ENCODE measurements at regions of chr3 and their contacts with region 1.

Region 1: DNA sequence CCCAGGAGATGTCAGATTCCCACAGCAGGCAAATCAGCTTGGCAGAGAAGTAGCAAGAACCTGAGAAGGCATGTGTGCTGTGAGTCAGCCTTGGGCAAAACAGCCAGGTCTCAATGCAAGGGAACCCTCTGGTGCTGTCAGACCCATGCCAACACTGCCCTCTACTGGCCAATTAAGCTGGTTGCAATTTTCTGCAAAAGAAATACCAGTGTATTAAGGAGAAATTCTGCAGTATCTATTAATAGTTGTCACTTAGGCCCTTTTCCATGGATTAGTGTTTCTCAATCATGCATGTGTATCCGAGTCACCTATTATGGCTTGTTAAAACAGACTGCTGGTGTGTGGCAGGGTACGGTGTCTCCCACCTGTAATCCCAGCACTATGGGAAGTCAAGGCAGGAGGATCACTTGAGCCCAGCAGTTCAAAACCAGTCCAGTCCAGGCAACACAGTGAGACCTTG is 26.2 kb downstream of the MAP4 start:
- DNase-seq: peak; percentile 73 to 83 (median 76)
- ATAC-seq: peak; percentile 91 to 95
- H3K4me3 ChIP-seq: no peak overlapping the region
- H3K27ac ChIP-seq: no peak overlapping the region
- H3K4me1 ChIP-seq: peaks cover 1% of the 10 kb centered on the region
- H3K27me3 ChIP-seq: no peaks in the 10 kb centered on the region

Region 2: DNA sequence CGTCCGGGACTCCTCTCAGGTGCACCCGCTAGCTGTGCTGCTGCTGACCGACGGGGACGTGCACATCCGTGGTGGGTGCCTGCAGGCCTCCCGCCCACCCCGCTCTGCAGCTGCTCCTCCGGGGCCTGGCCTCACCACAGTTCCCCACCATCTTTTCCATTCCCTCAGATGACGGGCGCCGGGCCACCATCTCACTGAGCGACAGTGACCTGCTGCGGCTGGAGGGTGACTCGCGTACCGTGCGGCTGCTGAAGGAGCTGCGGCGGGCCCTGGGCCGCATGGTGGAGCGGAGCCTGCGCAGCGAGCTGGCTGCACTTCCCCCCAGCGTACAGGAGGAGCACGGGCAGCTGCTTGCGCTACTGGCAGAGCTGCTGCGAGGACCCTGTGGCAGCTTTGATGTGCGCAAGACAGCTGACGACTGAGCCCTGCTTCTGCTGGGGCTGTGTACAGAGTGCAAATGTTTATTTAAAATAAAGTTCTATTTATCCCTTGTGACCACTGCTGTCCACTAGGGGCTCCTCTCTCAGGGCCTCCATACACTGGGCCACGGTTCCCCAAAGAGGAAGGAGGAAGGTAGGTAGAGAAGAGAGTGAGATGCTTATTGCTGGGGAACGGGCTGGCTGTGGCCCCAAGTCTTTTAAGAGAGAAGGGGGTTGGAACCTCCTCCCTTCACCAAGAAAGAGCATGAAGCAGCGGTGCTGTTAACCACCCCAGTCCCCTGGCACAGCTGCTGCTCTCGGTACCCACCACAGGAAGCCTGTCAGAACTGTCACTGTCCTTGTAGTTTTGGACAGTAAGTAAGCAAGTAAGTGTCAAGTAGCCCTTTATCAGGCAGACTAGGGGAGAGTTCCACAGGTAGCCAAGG is 140.1 kb before region 1 on chr3:
- intact Hi-C with region 1: loop called in 1 of 4 experiments (anchors 10 kb)
- DNase-seq: peak in 1 of 3 donors; percentile 63
- ATAC-seq: peak; percentile 2 to 3
- H3K4me3 ChIP-seq: no peak overlapping the region
- H3K27ac ChIP-seq: no peak overlapping the region
- H3K4me1 ChIP-seq: no peaks in the 10 kb centered on the region
- H3K27me3 ChIP-seq: no peaks in the 10 kb centered on the region

Region 3: GRCh38 chr3:48151058-48151806 is 161.2 kb after region 1 on chr3:
- intact Hi-C with region 1: loop called in 3 of 4 experiments (anchors 10 kb)
- DNase-seq: peak; percentile 79 to 92 (median 90)
- ATAC-seq: peak; percentile 97
- H3K4me3 ChIP-seq: no peak overlapping the region
- H3K27ac ChIP-seq: peak overlapping the region; percentile 45
- H3K4me1 ChIP-seq: peaks cover 6% of the 10 kb centered on the region
- H3K27me3 ChIP-seq: no peaks in the 10 kb centered on the region